IMR-90 (cell line): ENCODE measurements at regions of chr7 and their contacts with region 1.

Region 1: GRCh38 chr7:101625031-101625791 is 3.9 kb downstream of the MYL10 start:
- DNase-seq: peak; percentile 29
- ATAC-seq: peak; percentile 42; the same call in 1 of the 2 replicates
- H3K4me3 ChIP-seq: no peak overlapping the region
- H3K27ac ChIP-seq: no peak overlapping the region
- H3K4me1 ChIP-seq: no peaks in the 10 kb centered on the region
- H3K27me3 ChIP-seq: peaks cover 33% of the 10 kb centered on the region
- CTCF ChIP-seq: no peak
- POLR2A ChIP-seq: no peak
- RAD21 ChIP-seq: no peak

Region 2: GRCh38 chr7:101342892-101343291 is 282.3 kb before region 1 on chr7:
- CTCF ChIA-PET with region 1: no interaction called
- POLR2A ChIA-PET with region 1: no interaction called
- dilution Hi-C with region 1: no loop called
- in situ Hi-C with region 1: no loop called
- intact Hi-C with region 1: no loop called
- DNase-seq: no peak
- ATAC-seq: no peak
- H3K4me3 ChIP-seq: no peak overlapping the region
- H3K27ac ChIP-seq: no peak overlapping the region
- H3K4me1 ChIP-seq: no peaks in the 10 kb centered on the region
- H3K27me3 ChIP-seq: peaks cover 4% of the 10 kb centered on the region
- CTCF ChIP-seq: no peak
- POLR2A ChIP-seq: no peak
- RAD21 ChIP-seq: no peak

Region 3: GRCh38 chr7:101681170-101682007 is 56.2 kb after region 1 on chr7:
- CTCF ChIA-PET with region 1: no interaction called
- POLR2A ChIA-PET with region 1: no interaction called
- dilution Hi-C with region 1: no loop called
- in situ Hi-C with region 1: no loop called
- intact Hi-C with region 1: no loop called
- DNase-seq: peak; percentile 87
- ATAC-seq: peak; percentile 97
- H3K4me3 ChIP-seq: no peak overlapping the region
- H3K27ac ChIP-seq: peak overlapping the region; percentile 24; the same call in 1 of the 2 replicates
- H3K4me1 ChIP-seq: peaks cover 8% of the 10 kb centered on the region
- H3K27me3 ChIP-seq: no peaks in the 10 kb centered on the region
- CTCF ChIP-seq: no peak
- POLR2A ChIP-seq: no peak
- RAD21 ChIP-seq: no peak

Region 4: DNA sequence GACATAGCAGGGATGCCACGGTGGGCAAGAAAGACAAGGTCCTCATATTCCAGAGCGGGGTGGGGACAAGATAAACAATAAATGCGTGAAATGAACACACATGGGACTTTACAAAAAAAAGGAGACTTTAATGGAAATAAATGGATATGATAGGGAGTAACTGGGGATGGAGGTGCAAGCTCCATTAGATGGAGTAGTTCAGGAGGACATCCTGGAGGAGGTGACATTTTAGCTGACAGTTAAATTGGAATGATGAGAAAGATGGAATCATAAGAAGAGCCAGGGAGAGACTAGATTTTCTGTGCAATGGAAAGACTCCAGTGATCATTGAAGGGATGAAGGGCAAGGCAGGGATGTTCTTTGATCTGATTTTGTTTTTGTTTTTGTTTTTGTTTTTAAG is 87.4 kb after region 1 on chr7:
- CTCF ChIA-PET with region 1: no interaction called
- POLR2A ChIA-PET with region 1: interaction called, 14 read pairs
- dilution Hi-C with region 1: no loop called
- in situ Hi-C with region 1: no loop called
- intact Hi-C with region 1: no loop called
- DNase-seq: no peak
- ATAC-seq: no peak
- H3K4me3 ChIP-seq: no peak overlapping the region
- H3K27ac ChIP-seq: no peak overlapping the region
- H3K4me1 ChIP-seq: peaks cover 3% of the 10 kb centered on the region
- H3K27me3 ChIP-seq: peaks cover 13% of the 10 kb centered on the region
- CTCF ChIP-seq: no peak
- POLR2A ChIP-seq: no peak
- RAD21 ChIP-seq: no peak

Region 5: GRCh38 chr7:102106625-102107024 is 481.4 kb after region 1 on chr7:
- CTCF ChIA-PET with region 1: no interaction called
- POLR2A ChIA-PET with region 1: no interaction called
- dilution Hi-C with region 1: no loop called
- in situ Hi-C with region 1: no loop called
- intact Hi-C with region 1: no loop called
- DNase-seq: no peak
- ATAC-seq: peak; percentile 24; the same call in 1 of the 2 replicates
- H3K4me3 ChIP-seq: no peak overlapping the region
- H3K27ac ChIP-seq: no peak overlapping the region
- H3K4me1 ChIP-seq: no peaks in the 10 kb centered on the region
- H3K27me3 ChIP-seq: no peaks in the 10 kb centered on the region
- CTCF ChIP-seq: no peak
- POLR2A ChIP-seq: no peak
- RAD21 ChIP-seq: no peak